CD14-positive monocyte (primary cell): ENCODE measurements at regions of chr14 and their contacts with region 1.

Region 1: GRCh38 chr14:30974628-30975027 is 50.8 kb upstream of the AP4S1 start:
- DNase-seq: no peak
- H3K4me3 ChIP-seq: no peak overlapping the region
- H3K4me3 Mint-ChIP-seq: no peak overlapping the region
- H3K27ac ChIP-seq: no peak overlapping the region
- H3K27ac Mint-ChIP-seq: peak overlapping the region in 1 of 7 donors; percentile 80
- H3K4me1 ChIP-seq: peaks cover 0 to 13% of the 10 kb centered on the region in 2 donors
- H3K4me1 Mint-ChIP-seq: peaks cover 31% of the 10 kb centered on the region
- H3K27me3 ChIP-seq: no peaks in the 10 kb centered on the region
- H3K27me3 Mint-ChIP-seq: peaks cover 0 to 1% (median 0%) of the 10 kb centered on the region in 3 donors
- CTCF ChIP-seq: no peak

Region 2: GRCh38 chr14:30883508-30884294 is 90.9 kb before region 1 on chr14:
- intact Hi-C with region 1: no loop called
- DNase-seq: no peak
- H3K4me3 ChIP-seq: no peak overlapping the region
- H3K4me3 Mint-ChIP-seq: no peak overlapping the region
- H3K27ac ChIP-seq: no peak overlapping the region
- H3K27ac Mint-ChIP-seq: no peak overlapping the region
- H3K4me1 ChIP-seq: no peaks in the 10 kb centered on the region
- H3K4me1 Mint-ChIP-seq: peaks cover 6% of the 10 kb centered on the region
- H3K27me3 ChIP-seq: no peaks in the 10 kb centered on the region
- H3K27me3 Mint-ChIP-seq: no peaks in the 10 kb centered on the region
- CTCF ChIP-seq: no peak

Region 3: DNA sequence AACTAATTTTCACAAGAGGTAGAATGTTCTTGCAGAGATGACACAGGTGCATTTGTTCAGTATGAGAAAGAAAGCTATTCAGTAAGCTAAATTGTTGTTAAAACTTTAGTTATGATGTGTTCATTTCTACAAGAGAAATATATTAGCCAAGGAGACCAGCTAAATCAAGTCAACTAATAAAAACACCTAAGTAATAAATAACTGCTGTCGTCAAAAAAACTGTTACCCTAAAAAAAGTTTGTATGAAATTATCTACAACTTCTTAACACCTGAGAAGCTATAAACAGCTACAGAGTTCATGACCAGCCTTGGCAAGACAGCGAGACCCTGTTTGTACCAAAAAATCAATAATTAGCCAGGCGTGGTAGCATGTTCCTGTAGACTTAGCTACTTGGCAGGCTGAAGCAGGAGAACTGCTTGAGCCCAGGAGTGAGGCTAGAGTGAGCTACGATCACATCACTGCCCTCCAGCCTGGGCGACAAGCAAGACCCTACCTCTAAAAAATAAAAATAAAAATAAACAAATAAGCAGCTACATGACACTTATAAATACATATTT is 16.7 kb before region 1 on chr14:
- intact Hi-C with region 1: no loop called
- DNase-seq: no peak
- H3K4me3 ChIP-seq: no peak overlapping the region
- H3K4me3 Mint-ChIP-seq: no peak overlapping the region
- H3K27ac ChIP-seq: no peak overlapping the region
- H3K27ac Mint-ChIP-seq: no peak overlapping the region
- H3K4me1 ChIP-seq: no peaks in the 10 kb centered on the region
- H3K4me1 Mint-ChIP-seq: peaks cover 19% of the 10 kb centered on the region
- H3K27me3 ChIP-seq: no peaks in the 10 kb centered on the region
- H3K27me3 Mint-ChIP-seq: no peaks in the 10 kb centered on the region
- CTCF ChIP-seq: no peak

Region 4: GRCh38 chr14:31009836-31010574 is 35.4 kb after region 1 on chr14:
- intact Hi-C with region 1: no loop called
- DNase-seq: no peak
- H3K4me3 ChIP-seq: no peak overlapping the region
- H3K4me3 Mint-ChIP-seq: no peak overlapping the region
- H3K27ac ChIP-seq: no peak overlapping the region
- H3K27ac Mint-ChIP-seq: peak overlapping the region in 3 of 7 donors; percentile 30 to 74 (median 63)
- H3K4me1 ChIP-seq: no peaks in the 10 kb centered on the region
- H3K4me1 Mint-ChIP-seq: no peaks in the 10 kb centered on the region
- H3K27me3 ChIP-seq: no peaks in the 10 kb centered on the region
- H3K27me3 Mint-ChIP-seq: no peaks in the 10 kb centered on the region
- CTCF ChIP-seq: no peak

Region 5: GRCh38 chr14:31084385-31084784 is 109.8 kb after region 1 on chr14:
- intact Hi-C with region 1: loop called (anchors 5 kb)
- DNase-seq: no peak
- H3K4me3 ChIP-seq: no peak overlapping the region
- H3K4me3 Mint-ChIP-seq: no peak overlapping the region
- H3K27ac ChIP-seq: no peak overlapping the region
- H3K27ac Mint-ChIP-seq: no peak overlapping the region
- H3K4me1 ChIP-seq: no peaks in the 10 kb centered on the region
- H3K4me1 Mint-ChIP-seq: no peaks in the 10 kb centered on the region
- H3K27me3 ChIP-seq: no peaks in the 10 kb centered on the region
- H3K27me3 Mint-ChIP-seq: no peaks in the 10 kb centered on the region
- CTCF ChIP-seq: no peak